Dendritic cell treated with granulocyte-macrophage colony-stimulating factor and Interleukin-4, amounts not matched to agents 40 ng/mL and 50 ng/mL, for 4 days (primary cell): ENCODE measurements at regions of chr15 and their contacts with region 1.

Region 1: DNA sequence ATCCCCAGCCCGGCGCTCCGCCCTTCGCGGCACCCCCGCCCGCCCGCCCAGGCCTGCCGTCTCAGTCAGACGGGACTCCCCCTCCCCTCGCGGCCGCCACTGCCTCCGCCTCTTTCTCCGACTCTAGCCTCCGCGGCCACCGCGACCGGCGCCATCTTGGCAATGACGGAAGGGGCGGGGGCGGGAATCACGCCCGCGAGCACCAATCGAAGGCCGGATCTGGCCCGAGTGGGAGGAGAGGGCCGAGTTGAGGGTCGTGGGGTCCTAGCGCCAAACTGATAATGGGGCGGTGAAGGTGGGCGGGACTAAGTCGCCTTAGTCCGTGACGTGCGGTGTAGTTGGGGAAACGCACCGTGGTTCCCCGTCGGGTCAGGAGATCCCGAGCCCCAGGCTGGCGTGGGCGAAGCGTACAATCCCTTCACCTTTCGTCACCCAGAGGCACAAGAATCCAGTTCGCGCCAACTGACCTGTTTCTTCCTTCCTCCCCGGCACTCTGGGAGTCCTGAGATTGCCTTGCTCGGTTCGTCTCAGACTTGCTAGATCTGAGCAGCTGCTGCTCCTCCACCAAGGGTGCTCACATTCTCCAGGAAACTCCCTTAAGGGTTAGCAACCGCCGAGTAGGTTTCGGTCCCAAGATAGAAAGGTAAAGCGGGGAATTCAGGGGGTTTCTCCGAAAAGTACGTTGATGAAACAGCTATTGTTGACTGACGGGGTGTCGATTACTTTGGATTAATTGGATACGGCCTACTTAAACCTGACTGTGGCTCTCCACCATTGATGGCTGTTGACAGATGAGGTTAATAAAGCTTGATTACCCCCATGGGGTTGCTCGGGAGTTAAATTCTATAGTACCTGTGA is at the start of gene DENND4A:
- H3K4me3 Mint-ChIP-seq: peak within 1 kb of the TSS; percentile 96
- H3K27ac Mint-ChIP-seq: peak within 1 kb of the TSS; percentile 99
- H3K4me1 Mint-ChIP-seq: peaks cover 41% of the 10 kb centered on the region
- H3K27me3 Mint-ChIP-seq: no peaks in the 10 kb centered on the region

Region 2: GRCh38 chr15:65818927-65819562 is 26.7 kb after region 1 on chr15:
- intact Hi-C with region 1: loop called (anchors 2 kb)
- H3K4me3 Mint-ChIP-seq: no peak overlapping the region
- H3K27ac Mint-ChIP-seq: peak overlapping the region; percentile 85
- H3K4me1 Mint-ChIP-seq: peaks cover 33% of the 10 kb centered on the region
- H3K27me3 Mint-ChIP-seq: peaks cover 11% of the 10 kb centered on the region

Region 3: DNA sequence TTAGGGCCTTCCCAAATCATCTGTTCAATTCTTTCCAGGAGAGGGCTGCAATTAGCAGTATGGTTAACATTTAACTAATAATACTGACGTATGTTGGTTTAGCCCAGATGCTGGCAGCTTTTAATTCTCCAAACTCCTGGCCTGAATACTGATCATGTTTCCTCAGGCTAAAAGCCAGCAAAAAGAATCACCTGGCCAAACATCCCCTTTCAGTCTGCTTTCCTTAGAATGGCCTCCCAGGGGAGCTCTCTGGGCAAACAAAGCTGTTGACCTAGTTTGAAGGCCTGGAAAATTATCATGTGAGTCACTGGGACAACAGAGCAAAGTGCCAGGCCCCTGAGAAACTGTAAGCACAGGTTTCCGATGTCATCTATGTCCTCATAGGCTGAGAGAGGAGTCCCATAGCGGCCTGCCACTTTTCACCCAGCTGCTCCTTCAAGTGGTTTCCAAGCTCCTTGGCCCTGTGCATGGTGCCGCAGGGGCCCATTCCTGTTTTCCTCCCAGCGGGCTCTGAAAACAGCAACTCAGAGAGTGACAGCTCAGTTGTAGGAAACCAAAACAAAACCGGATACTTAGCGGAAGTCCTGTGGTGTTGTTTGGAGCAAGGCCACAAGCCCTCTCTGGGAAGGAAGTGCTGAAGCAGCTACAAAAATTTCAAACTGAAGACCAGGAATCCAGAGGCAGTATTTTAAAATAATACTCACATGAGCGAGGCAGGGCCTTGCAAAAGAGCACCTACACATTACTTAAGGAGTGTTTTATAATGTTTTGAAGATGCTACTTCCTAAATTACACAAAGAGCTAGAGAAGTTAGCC is 40.4 kb after region 1 on chr15:
- intact Hi-C with region 1: loop called (anchors 5 kb)
- H3K4me3 Mint-ChIP-seq: peak overlapping the region; percentile 50
- H3K27ac Mint-ChIP-seq: peak overlapping the region; percentile 83
- H3K4me1 Mint-ChIP-seq: peaks cover 46% of the 10 kb centered on the region
- H3K27me3 Mint-ChIP-seq: no peaks in the 10 kb centered on the region